Vagina (tissue), 2 donors: ENCODE measurements at regions of chr3 and their contacts with region 1.

Region 1: GRCh38 chr3:25427942-25428788 is at the start of gene RARB:
- DNase-seq: no peak
- H3K4me3 ChIP-seq: peak within 1 kb of the TSS; percentile 53 to 59
- H3K27ac ChIP-seq: peak within 1 kb of the TSS; percentile 88
- H3K4me1 ChIP-seq: peaks cover 42% of the 10 kb centered on the region
- H3K27me3 ChIP-seq: no peaks in the 10 kb centered on the region
- CTCF ChIP-seq: no peak
- POLR2A ChIP-seq: peak in 1 of 2 donors; percentile 86
- total RNA-seq, gene RARB: 15.0 TPM

Region 2: GRCh38 chr3:24278543-24278942 is 1149.6 kb before region 1 on chr3:
- intact Hi-C with region 1: no loop called
- DNase-seq: no peak
- H3K4me3 ChIP-seq: no peak overlapping the region
- H3K27ac ChIP-seq: no peak overlapping the region
- H3K4me1 ChIP-seq: no peaks in the 10 kb centered on the region
- H3K27me3 ChIP-seq: no peaks in the 10 kb centered on the region
- CTCF ChIP-seq: no peak
- POLR2A ChIP-seq: no peak

Region 3: GRCh38 chr3:25460751-25461150 is 32.6 kb after region 1 on chr3:
- intact Hi-C with region 1: loop called (anchors 2 kb)
- DNase-seq: no peak
- H3K4me3 ChIP-seq: no peak overlapping the region
- H3K27ac ChIP-seq: no peak overlapping the region
- H3K4me1 ChIP-seq: peaks cover 36% of the 10 kb centered on the region
- H3K27me3 ChIP-seq: no peaks in the 10 kb centered on the region
- CTCF ChIP-seq: no peak
- POLR2A ChIP-seq: no peak

Region 4: GRCh38 chr3:25594007-25594502 is 165.9 kb after region 1 on chr3:
- intact Hi-C with region 1: loop called (anchors 10 kb)
- DNase-seq: peak in 1 of 2 donors; percentile 75
- H3K4me3 ChIP-seq: no peak overlapping the region
- H3K27ac ChIP-seq: no peak overlapping the region
- H3K4me1 ChIP-seq: peaks cover 22% of the 10 kb centered on the region
- H3K27me3 ChIP-seq: no peaks in the 10 kb centered on the region
- CTCF ChIP-seq: peak; percentile 75 to 87 (median 77)
- POLR2A ChIP-seq: no peak